ENCODE measurements at regions of chr6 and their contacts with region 1.

Region 1: DNA sequence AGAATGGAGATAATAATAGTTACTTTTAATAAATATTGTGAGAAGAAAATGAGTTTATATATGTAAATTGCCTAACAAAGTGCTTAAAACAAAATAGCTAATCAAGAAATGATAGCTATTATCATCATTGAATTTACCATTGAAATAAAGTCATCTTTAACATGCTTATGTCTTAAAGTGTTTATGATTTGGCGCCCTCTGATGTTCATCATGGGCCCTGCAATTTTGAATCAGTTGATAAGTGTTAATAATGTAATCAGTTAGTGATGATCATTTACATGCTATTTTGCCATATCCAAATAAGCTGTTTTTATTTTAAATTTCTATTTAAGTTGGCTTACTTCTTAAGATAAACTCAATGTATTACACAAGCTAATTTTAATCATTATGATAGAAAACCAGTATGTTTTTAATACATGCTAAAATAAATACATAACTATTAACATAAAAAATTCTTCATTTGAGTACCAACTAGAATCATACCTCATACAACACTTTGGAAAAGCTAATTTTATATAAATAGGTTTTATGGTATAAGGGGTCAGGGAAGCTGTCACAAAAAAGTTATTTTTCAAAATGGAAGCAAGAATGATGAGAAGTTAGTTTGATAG is 39.2 kb upstream of the TPD52L1 start:
- DNase-seq: no peak
- H3K4me3 ChIP-seq: no peak overlapping the region
- H3K27ac ChIP-seq: no peak overlapping the region
- H3K4me1 ChIP-seq: no peaks in the 10 kb centered on the region
- H3K27me3 ChIP-seq: no peaks in the 10 kb centered on the region
- CTCF ChIP-seq: peak in 2 of 3 experiments; percentile 37 to 60; a peak in 2 of 4 replicates
- EP300 ChIP-seq: no peak
- POLR2A ChIP-seq: no peak
- RAD21 ChIP-seq: peak; percentile 70 to 79

Region 2: DNA sequence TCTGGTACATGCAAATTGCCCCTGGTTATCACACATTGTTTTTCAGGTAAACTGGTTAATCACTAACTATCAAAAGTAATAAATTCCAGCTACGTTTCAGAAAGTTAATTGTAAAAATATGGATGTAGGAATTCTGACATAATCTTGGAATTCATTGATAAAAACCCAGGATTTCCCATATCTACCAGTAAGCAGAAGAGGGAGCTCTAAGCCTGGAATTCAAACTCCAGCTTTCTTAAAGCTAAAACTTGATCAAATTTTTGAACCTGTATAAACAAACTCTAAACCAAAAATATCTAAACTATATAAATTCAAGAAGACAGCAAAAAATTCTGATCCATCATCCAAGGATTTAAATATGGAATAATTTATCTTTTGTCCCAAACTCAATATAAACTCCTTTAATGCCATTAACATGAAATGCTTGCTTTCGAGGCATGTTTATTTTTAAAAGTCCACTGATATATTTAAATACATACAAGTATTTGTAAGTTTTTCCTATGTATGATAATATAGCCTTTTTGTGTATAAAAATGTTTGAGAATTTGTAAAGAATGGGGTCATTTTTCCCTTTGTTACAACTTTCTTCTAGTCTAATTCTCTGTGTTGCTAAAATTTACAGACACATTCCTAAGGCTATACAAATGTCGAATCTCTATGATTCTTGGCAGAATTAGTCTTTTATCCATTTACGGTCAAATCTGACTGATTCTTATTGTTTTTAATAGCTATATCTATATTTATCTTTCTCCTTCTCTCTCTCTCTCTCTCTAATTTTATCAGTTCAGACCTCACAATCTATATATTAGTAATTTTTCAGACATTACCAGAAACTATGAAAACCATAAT is 243.5 kb before region 1 on chr6:
- CTCF ChIA-PET with region 1: interaction called, 69 read pairs
- POLR2A ChIA-PET with region 1: no interaction called
- DNase-seq: no peak
- H3K4me3 ChIP-seq: no peak overlapping the region
- H3K27ac ChIP-seq: no peak overlapping the region
- H3K4me1 ChIP-seq: no peaks in the 10 kb centered on the region
- H3K27me3 ChIP-seq: no peaks in the 10 kb centered on the region
- CTCF ChIP-seq: peak in 2 of 3 experiments; percentile 41 to 49; a peak in 2 of 4 replicates
- EP300 ChIP-seq: no peak
- POLR2A ChIP-seq: no peak
- RAD21 ChIP-seq: peak; percentile 79 to 86

Region 3: DNA sequence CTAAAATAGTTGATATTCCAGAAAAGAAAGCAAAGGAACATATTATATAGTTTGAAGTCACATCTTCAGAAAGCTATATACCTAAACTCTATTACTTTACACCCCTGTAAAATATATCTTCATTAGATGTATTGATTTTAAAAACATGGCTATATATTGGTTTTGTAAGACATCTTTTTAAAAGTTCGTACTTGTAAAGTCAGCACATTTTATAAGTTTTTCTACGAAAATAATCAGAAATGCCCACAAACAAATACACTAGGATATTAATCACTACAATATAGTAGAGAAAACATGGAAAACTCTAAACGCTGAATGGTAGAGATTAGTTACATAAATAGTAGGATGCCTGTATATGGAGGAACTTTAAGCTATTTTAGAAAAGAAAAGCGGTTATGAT is 99.2 kb before region 1 on chr6:
- CTCF ChIA-PET with region 1: interaction called, 10 read pairs
- POLR2A ChIA-PET with region 1: no interaction called
- DNase-seq: no peak
- H3K4me3 ChIP-seq: no peak overlapping the region
- H3K27ac ChIP-seq: no peak overlapping the region
- H3K4me1 ChIP-seq: peaks cover 2 to 11% (median 7%) of the 10 kb centered on the region in 4 experiments; a peak in 6 of 7 replicates
- H3K27me3 ChIP-seq: no peaks in the 10 kb centered on the region
- CTCF ChIP-seq: no peak
- EP300 ChIP-seq: no peak
- POLR2A ChIP-seq: no peak
- RAD21 ChIP-seq: no peak

Region 4: DNA sequence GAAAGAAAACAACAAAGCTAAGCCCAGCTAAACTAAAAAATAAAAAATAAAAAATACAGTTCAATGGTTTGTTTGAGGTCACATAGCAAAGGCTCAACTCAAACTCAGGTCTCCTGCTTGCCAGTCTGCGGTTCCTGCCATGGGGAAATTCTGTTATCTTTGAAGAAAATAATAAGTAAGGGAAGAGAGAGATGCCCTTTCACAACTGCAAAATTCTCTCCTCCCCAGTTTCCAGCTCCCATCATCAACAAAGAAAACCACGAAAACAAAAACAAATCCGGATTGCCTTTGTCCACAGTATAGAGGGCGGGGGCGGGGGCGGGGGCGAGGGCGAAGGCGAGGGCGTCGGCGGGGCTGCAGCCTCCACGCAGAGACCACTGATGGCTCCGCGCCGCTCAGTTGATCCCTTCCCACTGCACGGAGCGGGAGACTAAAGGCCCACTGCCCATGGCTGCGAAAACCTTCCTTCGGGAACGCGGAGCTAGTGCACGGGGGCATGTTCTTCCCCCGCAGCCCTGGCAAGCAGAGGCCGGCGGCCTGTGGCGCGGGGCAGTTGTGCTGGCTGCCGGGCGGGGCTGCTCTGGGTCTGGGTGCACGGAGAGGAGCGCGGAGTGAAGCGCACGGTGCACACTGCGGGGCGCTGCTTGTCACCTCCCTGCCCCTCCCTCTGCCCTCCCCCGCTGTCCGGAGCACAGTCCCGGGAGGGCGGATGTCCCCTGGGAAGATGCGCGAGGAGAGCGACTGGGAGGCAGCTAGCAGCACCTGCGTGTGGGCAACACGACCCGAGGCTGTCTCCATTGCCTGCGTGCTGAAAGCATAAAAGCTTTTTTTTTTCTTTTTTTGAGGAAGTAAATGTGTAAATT is 14.9 kb before region 1 on chr6:
- CTCF ChIA-PET with region 1: interaction called, 27 read pairs
- POLR2A ChIA-PET with region 1: no interaction called
- DNase-seq: peak; percentile 15 to 77
- H3K4me3 ChIP-seq: peak overlapping the region; percentile 37 to 73 (median 48)
- H3K27ac ChIP-seq: no peak overlapping the region
- H3K4me1 ChIP-seq: peaks cover 0 to 12% (median 7%) of the 10 kb centered on the region in 4 experiments; a peak in 4 of 7 replicates
- H3K27me3 ChIP-seq: no peaks in the 10 kb centered on the region; a peak in 1 of 7 replicates
- CTCF ChIP-seq: no peak
- EP300 ChIP-seq: no peak
- POLR2A ChIP-seq: peak in 1 of 2 experiments; percentile 46; a peak in 1 of 3 replicates
- RAD21 ChIP-seq: no peak

Region 5: GRCh38 chr6:125142618-125143017 is 28.3 kb after region 1 on chr6:
- CTCF ChIA-PET with region 1: interaction called, 13 read pairs
- POLR2A ChIA-PET with region 1: no interaction called
- DNase-seq: no peak
- H3K4me3 ChIP-seq: no peak overlapping the region
- H3K27ac ChIP-seq: no peak overlapping the region
- H3K4me1 ChIP-seq: no peaks in the 10 kb centered on the region
- H3K27me3 ChIP-seq: no peaks in the 10 kb centered on the region
- CTCF ChIP-seq: no peak
- EP300 ChIP-seq: no peak
- POLR2A ChIP-seq: no peak
- RAD21 ChIP-seq: no peak

Measured in H1 (cell line).